Vagina (tissue), 2 donors: ENCODE measurements at regions of chr5 and their contacts with region 1.

Region 1: DNA sequence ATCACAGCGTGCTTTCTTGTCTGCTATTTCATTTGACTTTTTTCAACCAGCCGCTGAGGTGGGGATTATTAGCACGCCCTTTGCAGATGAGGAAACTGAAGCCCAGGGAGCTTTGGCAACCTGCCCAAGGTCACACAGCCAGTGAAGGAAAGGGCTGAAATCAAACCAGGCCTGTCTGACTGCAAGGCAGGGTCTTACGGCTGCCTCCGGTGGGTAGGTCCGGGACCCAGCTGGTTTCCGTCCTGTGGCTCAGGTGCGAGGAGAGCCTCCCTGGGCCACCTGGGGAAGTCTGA is 106.4 kb upstream of the MSX2 start:
- DNase-seq: no peak
- H3K4me3 ChIP-seq: no peak overlapping the region
- H3K27ac ChIP-seq: no peak overlapping the region
- H3K4me1 ChIP-seq: no peaks in the 10 kb centered on the region
- H3K27me3 ChIP-seq: no peaks in the 10 kb centered on the region
- CTCF ChIP-seq: no peak
- POLR2A ChIP-seq: no peak

Region 2: GRCh38 chr5:174327317-174328236 is 290.4 kb before region 1 on chr5:
- intact Hi-C with region 1: loop called (anchors 5 kb)
- DNase-seq: no peak
- H3K4me3 ChIP-seq: no peak overlapping the region
- H3K27ac ChIP-seq: no peak overlapping the region
- H3K4me1 ChIP-seq: no peaks in the 10 kb centered on the region
- H3K27me3 ChIP-seq: no peaks in the 10 kb centered on the region
- CTCF ChIP-seq: peak in 1 of 3 experiments; percentile 21
- POLR2A ChIP-seq: no peak

Region 3: GRCh38 chr5:174501461-174502069 is 116.4 kb before region 1 on chr5:
- intact Hi-C with region 1: no loop called
- DNase-seq: no peak
- H3K4me3 ChIP-seq: no peak overlapping the region
- H3K27ac ChIP-seq: no peak overlapping the region
- H3K4me1 ChIP-seq: peaks cover 5% of the 10 kb centered on the region
- H3K27me3 ChIP-seq: no peaks in the 10 kb centered on the region
- CTCF ChIP-seq: no peak
- POLR2A ChIP-seq: no peak

Region 4: GRCh38 chr5:174563899-174564298 is 54.1 kb before region 1 on chr5:
- intact Hi-C with region 1: no loop called
- DNase-seq: no peak
- H3K4me3 ChIP-seq: no peak overlapping the region
- H3K27ac ChIP-seq: no peak overlapping the region
- H3K4me1 ChIP-seq: no peaks in the 10 kb centered on the region
- H3K27me3 ChIP-seq: no peaks in the 10 kb centered on the region
- CTCF ChIP-seq: no peak
- POLR2A ChIP-seq: no peak